ENCODE measurements at regions of chr11 and their contacts with region 1.

Region 1: DNA sequence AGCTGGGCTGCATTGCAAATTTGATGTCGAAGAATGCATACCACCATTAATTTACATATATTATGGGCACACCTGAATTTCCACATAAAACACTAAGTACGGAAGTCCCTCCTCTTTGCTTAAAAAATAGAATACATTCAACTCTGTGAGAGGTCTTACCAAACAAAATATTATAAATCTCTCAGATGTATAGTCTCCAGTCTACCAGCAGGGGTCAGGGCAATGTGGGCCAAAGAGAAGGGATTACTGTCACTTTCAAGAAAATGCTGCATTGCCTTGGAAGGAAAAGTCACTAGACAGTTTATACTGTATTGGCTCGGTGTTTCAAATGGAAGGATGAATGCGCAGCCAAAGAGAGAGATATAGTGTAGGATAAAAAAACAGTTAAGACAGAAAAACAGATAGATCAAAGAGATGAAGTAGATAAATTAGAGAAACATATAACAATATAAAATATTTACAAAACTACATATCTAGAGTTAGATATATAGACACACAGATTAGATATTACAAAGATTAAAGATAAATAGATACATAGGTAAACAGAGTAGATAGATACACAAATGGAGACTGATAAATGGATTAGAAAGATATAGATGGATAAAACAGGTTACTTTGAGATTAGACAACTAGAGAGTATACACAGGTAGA is 20.9 kb downstream of the SERGEF start:
- DNase-seq: peak; percentile 32
- H3K4me3 ChIP-seq: no peak overlapping the region
- H3K27ac ChIP-seq: no peak overlapping the region
- H3K4me1 ChIP-seq: peaks cover 11% of the 10 kb centered on the region
- H3K27me3 ChIP-seq: no peaks in the 10 kb centered on the region
- CTCF ChIP-seq: peak; percentile 83 to 89

Region 2: GRCh38 chr11:18203723-18204122 is 211.8 kb after region 1 on chr11:
- CTCF ChIA-PET with region 1: no interaction called
- dilution Hi-C with region 1: no loop called
- in situ Hi-C with region 1: no loop called
- intact Hi-C with region 1: loop called (anchors 10 kb)
- DNase-seq: no peak
- H3K4me3 ChIP-seq: no peak overlapping the region
- H3K27ac ChIP-seq: no peak overlapping the region
- H3K4me1 ChIP-seq: no peaks in the 10 kb centered on the region
- H3K27me3 ChIP-seq: no peaks in the 10 kb centered on the region
- CTCF ChIP-seq: peak; percentile 34 to 37